ENCODE measurements at regions of chr10 and their contacts with region 1.

Region 1: DNA sequence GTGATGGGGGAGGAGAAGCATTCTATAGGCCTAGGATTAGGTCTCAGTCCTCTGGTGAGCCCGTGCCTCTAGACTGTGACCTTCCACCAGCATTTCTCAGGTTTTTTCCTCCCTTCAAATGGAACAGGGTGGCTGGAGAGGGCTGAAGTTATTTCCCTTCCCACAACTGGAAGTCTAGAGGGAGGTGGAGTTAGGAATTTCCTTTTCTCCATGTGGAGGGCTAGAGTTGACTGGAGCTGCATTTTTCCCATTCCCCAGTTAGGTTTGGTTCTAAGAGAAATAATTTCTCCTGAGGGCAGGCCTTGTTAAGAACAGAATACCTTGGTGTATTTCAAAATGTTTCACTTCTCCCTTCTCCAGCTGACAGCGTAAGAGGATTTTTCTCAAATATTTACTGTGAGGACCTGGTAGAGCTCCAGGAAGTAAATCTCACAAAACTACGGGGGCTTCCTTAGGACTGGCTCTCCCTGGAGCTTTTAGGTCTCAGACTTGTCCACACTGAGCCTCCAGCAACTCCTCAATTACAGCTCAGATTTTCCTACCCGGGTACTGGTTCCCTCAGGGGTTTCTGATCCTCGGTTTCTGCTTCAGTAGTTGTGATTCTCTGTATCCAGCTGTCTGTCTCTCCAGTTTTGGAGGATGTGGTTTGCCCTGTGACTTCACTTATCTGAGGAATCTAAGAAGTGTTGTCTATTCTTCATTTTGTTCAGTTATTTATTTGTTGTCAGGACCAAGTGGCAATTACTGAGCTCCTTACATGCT is 6.0 kb upstream of the REEP3 start:
- DNase-seq: peak; percentile 20
- H3K4me3 Mint-ChIP-seq: peak overlapping the region; percentile 43
- H3K27ac Mint-ChIP-seq: peak overlapping the region; percentile 80
- H3K4me1 Mint-ChIP-seq: peaks cover 56% of the 10 kb centered on the region
- H3K27me3 Mint-ChIP-seq: no peaks in the 10 kb centered on the region

Region 2: DNA sequence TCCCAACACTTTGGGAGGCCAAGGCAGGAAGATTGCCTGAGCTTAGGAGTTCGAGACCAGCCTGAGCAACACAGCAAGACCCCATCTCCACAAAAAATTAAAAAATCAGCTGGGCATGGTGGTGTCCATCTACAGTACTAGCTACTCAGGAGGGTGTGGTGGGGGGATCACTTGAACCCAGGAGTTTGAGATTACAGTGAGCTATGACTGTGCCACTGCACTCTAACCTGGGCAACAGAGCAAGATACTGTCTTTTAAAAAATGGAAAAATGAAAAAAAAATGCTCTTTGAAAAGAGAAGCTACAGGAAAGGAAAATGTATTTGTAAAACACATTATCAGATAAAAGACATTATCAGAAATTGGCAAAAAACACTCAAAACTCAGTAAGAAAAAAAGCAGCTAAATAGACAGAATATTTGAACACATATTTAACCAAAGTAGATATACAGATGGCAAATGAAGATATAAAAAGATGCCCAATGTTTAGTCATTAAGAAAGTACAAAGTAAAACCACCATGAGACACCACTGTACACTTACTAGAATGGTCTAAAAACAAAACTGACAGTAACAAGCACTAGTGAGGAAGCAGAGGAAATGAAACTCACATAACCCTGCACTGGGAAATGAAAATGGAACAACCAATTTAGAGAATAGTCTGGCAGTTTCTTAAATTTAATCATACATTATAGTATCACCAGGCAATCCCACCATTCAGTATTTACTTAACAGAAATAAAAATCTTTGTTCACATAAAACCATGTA is 341.5 kb before region 1 on chr10:
- intact Hi-C with region 1: loop called (anchors 5 kb)
- DNase-seq: no peak
- H3K4me3 Mint-ChIP-seq: no peak overlapping the region
- H3K27ac Mint-ChIP-seq: peak overlapping the region; percentile 29
- H3K4me1 Mint-ChIP-seq: peaks cover 55% of the 10 kb centered on the region
- H3K27me3 Mint-ChIP-seq: no peaks in the 10 kb centered on the region

Region 3: GRCh38 chr10:63388421-63389031 is 126.7 kb before region 1 on chr10:
- intact Hi-C with region 1: loop called (anchors 10 kb)
- DNase-seq: no peak
- H3K4me3 Mint-ChIP-seq: peak overlapping the region; percentile 61
- H3K27ac Mint-ChIP-seq: peak overlapping the region; percentile 45
- H3K4me1 Mint-ChIP-seq: peaks cover 42% of the 10 kb centered on the region
- H3K27me3 Mint-ChIP-seq: peaks cover 2% of the 10 kb centered on the region